Right lobe of liver (tissue), 6 donors: ENCODE measurements at regions of chr12 and their contacts with region 1.

Region 1: DNA sequence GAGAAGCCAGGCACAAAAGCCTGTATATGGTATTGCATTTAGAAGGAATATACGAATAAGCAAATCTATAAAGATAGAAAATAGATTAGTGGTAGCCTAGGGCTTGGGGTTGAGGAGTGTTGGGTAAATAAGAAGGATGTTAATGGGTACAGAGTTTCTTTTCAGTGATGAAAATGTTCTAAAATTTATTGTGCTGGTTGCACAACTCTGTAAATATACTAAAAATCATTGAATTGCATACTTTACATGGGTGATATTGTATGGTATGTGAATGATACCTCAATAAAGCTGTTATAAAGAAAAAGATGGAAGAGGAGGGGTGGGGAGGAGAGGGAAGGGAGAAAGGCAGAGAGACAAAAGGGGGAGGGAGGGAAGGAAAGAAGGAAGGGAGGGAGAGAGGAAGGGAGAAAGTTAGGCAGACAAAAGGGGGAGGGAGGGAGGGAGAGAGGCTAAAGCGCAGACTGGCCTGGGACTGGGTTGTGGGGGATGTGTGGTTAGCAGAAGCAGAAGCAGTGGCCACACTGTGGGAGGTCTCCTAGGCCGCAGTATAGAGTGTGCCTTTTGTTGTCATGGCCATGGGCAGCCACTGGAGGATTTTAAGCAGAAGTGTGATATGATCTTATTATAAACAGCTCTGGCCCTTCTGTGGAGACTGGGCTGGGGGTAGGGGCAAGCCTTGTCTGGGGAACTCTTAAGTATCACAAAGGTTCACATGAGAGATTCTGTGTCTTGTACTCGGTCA is 73.6 kb upstream of the ELK3 start:
- DNase-seq: no peak
- ATAC-seq: peak; percentile 42 to 67 (median 60)
- H3K4me3 ChIP-seq: no peak overlapping the region
- H3K27ac ChIP-seq: no peak overlapping the region
- H3K4me1 ChIP-seq: peaks cover 0 to 11% (median 0%) of the 10 kb centered on the region in 4 donors
- H3K27me3 ChIP-seq: no peaks in the 10 kb centered on the region
- CTCF ChIP-seq: no peak
- POLR2A ChIP-seq: no peak

Region 2: DNA sequence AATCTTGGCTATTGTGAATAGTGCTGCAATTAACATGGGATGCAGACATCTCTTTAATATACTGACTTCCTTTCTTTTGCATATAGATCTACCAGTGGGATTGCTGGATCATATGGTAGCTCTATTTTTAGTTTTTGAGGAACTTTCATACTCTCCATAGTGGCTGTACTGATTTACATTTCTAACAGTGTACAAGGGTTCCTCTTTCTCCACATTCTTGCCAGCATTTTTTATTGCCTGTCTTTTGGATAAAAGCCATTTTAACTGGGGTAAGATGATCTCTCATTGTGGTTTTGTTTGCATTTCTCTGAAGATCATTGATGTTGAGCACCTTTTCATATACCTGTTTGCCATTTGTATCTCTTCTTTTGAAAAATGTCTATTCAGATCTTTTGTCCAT is 169.0 kb before region 1 on chr12:
- intact Hi-C with region 1: no loop called
- DNase-seq: no peak
- ATAC-seq: peak in 1 of 4 donors; percentile 26
- H3K4me3 ChIP-seq: no peak overlapping the region
- H3K27ac ChIP-seq: no peak overlapping the region
- H3K4me1 ChIP-seq: no peaks in the 10 kb centered on the region
- H3K27me3 ChIP-seq: no peaks in the 10 kb centered on the region
- CTCF ChIP-seq: no peak
- POLR2A ChIP-seq: no peak

Region 3: GRCh38 chr12:96070670-96071279 is 49.8 kb before region 1 on chr12:
- intact Hi-C with region 1: loop called in 1 of 2 experiments (anchors 10 kb)
- DNase-seq: no peak
- ATAC-seq: peak; percentile 39 to 62 (median 50)
- H3K4me3 ChIP-seq: no peak overlapping the region
- H3K27ac ChIP-seq: no peak overlapping the region
- H3K4me1 ChIP-seq: no peaks in the 10 kb centered on the region
- H3K27me3 ChIP-seq: no peaks in the 10 kb centered on the region
- CTCF ChIP-seq: peak in 2 of 4 donors; percentile 8 to 12
- POLR2A ChIP-seq: no peak

Region 4: GRCh38 chr12:96359328-96359727 is 238.8 kb after region 1 on chr12:
- intact Hi-C with region 1: no loop called
- DNase-seq: no peak
- ATAC-seq: no peak
- H3K4me3 ChIP-seq: no peak overlapping the region
- H3K27ac ChIP-seq: no peak overlapping the region
- H3K4me1 ChIP-seq: peaks cover 0 to 11% (median 0%) of the 10 kb centered on the region in 4 donors
- H3K27me3 ChIP-seq: no peaks in the 10 kb centered on the region
- CTCF ChIP-seq: no peak
- POLR2A ChIP-seq: no peak